ENCODE measurements at regions of chr5 and their contacts with region 1.

Region 1: DNA sequence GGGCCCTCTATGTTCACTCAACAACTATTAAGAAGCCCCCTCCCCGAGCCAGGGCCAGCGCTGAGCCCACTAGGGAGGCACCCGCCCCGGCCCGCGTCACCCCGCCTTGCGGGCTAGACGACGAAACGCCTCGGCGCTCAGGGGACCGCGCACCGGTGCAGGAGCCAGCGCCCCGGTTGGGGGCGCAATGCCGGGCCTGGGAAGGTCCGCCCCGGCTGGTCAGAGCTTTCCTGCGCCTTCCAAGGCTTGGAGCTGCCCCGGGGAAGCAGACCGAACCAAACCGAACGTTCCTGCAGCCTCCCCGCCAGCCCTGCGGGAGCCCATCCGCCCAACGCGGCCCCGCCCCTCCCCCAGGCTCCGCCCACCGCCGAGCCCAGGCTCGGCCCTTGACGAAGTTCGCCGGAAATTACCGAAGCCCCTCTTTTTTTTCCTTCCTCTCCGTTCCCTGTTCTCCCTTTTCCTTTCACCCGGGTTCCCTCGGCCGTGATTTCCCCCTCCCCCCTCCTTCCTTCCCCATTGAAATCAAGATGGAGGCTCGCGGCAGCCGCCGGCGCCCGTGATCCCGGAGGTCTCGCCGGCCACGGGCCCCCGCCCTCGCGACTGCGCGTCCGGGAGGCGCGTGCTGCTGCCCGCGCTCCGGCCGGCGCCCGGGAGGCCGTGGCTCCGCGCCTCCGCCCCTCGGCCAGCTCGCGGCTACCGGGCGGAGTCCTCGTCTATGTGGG is at the start of gene TRIO:
- DNase-seq: peak; percentile 93 to 96
- H3K4me3 ChIP-seq: peak within 1 kb of the TSS; percentile 92
- H3K4me3 Mint-ChIP-seq: peak within 1 kb of the TSS; percentile 84
- H3K27ac Mint-ChIP-seq: peak within 1 kb of the TSS; percentile 81
- H3K4me1 ChIP-seq: no peaks in the 10 kb centered on the region
- H3K4me1 Mint-ChIP-seq: no peaks in the 10 kb centered on the region
- H3K27me3 ChIP-seq: no peaks in the 10 kb centered on the region
- H3K27me3 Mint-ChIP-seq: peaks cover 3% of the 10 kb centered on the region
- CTCF ChIP-seq: peak; percentile 44 to 69
- total RNA-seq, gene TRIO: 92.0 and 98.9 TPM in 2 replicates

Region 2: GRCh38 chr5:13143630-13144029 is 999.4 kb before region 1 on chr5:
- CTCF ChIA-PET with region 1: no interaction called
- POLR2A ChIA-PET with region 1: no interaction called
- intact Hi-C with region 1: loop called (anchors 5 kb)
- DNase-seq: no peak
- H3K4me3 ChIP-seq: no peak overlapping the region
- H3K4me3 Mint-ChIP-seq: no peak overlapping the region
- H3K27ac Mint-ChIP-seq: no peak overlapping the region
- H3K4me1 ChIP-seq: no peaks in the 10 kb centered on the region
- H3K4me1 Mint-ChIP-seq: no peaks in the 10 kb centered on the region
- H3K27me3 ChIP-seq: no peaks in the 10 kb centered on the region
- H3K27me3 Mint-ChIP-seq: no peaks in the 10 kb centered on the region
- CTCF ChIP-seq: no peak

Region 3: DNA sequence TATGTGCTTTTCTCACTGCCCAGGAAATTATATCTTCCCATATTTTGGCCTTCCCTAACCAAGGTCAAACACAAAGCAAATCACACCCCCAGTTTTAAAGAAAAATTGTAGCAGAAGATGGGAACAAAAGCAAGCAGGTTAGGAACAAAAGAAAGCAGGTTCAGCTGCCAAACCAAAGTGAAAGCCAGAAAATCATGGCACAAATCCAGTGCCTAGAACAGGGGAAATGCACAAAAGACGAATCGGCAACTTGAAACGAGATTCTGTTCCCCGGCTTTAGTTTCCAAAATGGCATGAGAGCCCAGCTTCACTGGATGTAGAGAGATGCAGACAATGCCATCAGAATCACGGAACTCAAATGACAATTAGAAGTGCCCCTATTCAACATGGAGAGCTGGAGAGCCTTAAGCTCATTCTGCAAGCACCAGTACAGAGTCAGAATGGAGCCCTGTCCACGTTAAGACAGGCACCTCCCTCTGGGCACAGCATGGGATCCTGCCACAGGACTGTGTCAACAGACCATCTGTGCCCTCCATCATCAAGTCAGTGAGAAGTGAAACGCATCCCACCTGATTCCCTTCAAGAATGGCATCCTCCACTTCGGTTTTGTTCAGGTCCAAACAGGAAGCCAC is 212.3 kb before region 1 on chr5:
- CTCF ChIA-PET with region 1: no interaction called
- POLR2A ChIA-PET with region 1: no interaction called
- intact Hi-C with region 1: no loop called
- DNase-seq: no peak
- H3K4me3 ChIP-seq: no peak overlapping the region
- H3K4me3 Mint-ChIP-seq: no peak overlapping the region
- H3K27ac Mint-ChIP-seq: no peak overlapping the region
- H3K4me1 ChIP-seq: no peaks in the 10 kb centered on the region
- H3K4me1 Mint-ChIP-seq: no peaks in the 10 kb centered on the region
- H3K27me3 ChIP-seq: no peaks in the 10 kb centered on the region
- H3K27me3 Mint-ChIP-seq: no peaks in the 10 kb centered on the region
- CTCF ChIP-seq: no peak

Region 4: DNA sequence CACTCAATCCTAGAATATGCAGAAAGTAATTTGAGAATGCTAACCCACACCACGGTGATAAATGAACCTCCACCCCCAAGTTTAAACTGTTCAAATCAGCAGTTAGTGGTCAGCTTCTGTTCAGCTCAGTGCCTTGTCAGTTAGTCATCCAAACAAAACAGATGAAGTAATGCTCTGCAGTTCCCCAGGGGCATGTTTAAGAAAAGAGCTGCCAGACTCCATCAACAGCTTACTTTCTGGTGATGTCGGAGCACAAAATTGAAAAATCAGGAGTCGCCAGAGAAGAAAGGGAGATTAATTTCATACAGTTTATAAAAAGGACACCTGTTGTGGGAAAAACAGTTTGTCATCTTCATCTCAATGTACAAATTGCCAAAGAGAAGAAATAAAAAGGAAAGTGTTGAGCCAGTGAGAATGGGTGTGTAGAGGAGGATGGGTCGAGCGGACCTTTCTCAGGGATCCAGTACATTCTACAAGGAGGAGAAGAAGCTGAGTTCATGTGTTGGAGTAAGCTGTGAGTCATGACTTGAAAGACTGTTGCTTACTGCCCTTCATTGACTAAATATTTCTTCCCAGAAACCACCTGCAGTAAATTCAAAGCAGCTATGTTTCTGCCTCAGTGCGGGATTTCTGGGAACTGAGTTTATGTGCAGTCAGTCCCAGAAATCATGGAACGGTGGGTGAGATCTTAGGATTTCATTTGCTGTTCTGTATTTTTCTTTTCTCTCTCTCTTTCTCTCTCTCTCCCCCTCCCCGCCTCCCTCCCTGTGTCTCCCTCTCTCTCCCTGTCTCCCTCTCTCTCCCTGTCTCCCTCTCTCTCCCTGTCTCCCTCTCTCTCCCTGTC is 13.9 kb after region 1 on chr5:
- CTCF ChIA-PET with region 1: no interaction called
- POLR2A ChIA-PET with region 1: no interaction called
- intact Hi-C with region 1: no loop called
- DNase-seq: no peak
- H3K4me3 ChIP-seq: no peak overlapping the region
- H3K4me3 Mint-ChIP-seq: no peak overlapping the region
- H3K27ac Mint-ChIP-seq: no peak overlapping the region
- H3K4me1 ChIP-seq: peaks cover 20% of the 10 kb centered on the region
- H3K4me1 Mint-ChIP-seq: peaks cover 16% of the 10 kb centered on the region
- H3K27me3 ChIP-seq: no peaks in the 10 kb centered on the region
- H3K27me3 Mint-ChIP-seq: no peaks in the 10 kb centered on the region
- CTCF ChIP-seq: no peak

Region 5: GRCh38 chr5:14208071-14209021 is 65.4 kb after region 1 on chr5:
- CTCF ChIA-PET with region 1: interaction called, 4 read pairs
- POLR2A ChIA-PET with region 1: no interaction called
- intact Hi-C with region 1: loop called (anchors 2 kb)
- DNase-seq: peak; percentile 53 to 63
- H3K4me3 ChIP-seq: no peak overlapping the region
- H3K4me3 Mint-ChIP-seq: no peak overlapping the region
- H3K27ac Mint-ChIP-seq: no peak overlapping the region
- H3K4me1 ChIP-seq: peaks cover 32% of the 10 kb centered on the region
- H3K4me1 Mint-ChIP-seq: peaks cover 48% of the 10 kb centered on the region
- H3K27me3 ChIP-seq: no peaks in the 10 kb centered on the region
- H3K27me3 Mint-ChIP-seq: no peaks in the 10 kb centered on the region
- CTCF ChIP-seq: no peak

Region 6: GRCh38 chr5:14250084-14250695 is 107.2 kb after region 1 on chr5:
- CTCF ChIA-PET with region 1: no interaction called
- POLR2A ChIA-PET with region 1: interaction called, 4 read pairs
- intact Hi-C with region 1: loop called (anchors 1 kb)
- DNase-seq: peak; percentile 84 to 87
- H3K4me3 ChIP-seq: peak overlapping the region; percentile 31
- H3K4me3 Mint-ChIP-seq: peak overlapping the region; percentile 70
- H3K27ac Mint-ChIP-seq: peak overlapping the region; percentile 80
- H3K4me1 ChIP-seq: peaks cover 8% of the 10 kb centered on the region; the same call in 1 of the 2 replicates
- H3K4me1 Mint-ChIP-seq: peaks cover 19% of the 10 kb centered on the region
- H3K27me3 ChIP-seq: no peaks in the 10 kb centered on the region
- H3K27me3 Mint-ChIP-seq: no peaks in the 10 kb centered on the region
- CTCF ChIP-seq: no peak

Region 7: GRCh38 chr5:14270209-14270702 is 127.3 kb after region 1 on chr5:
- CTCF ChIA-PET with region 1: interaction called, 10 read pairs
- POLR2A ChIA-PET with region 1: interaction called, 4 read pairs
- intact Hi-C with region 1: loop called (anchors 1 kb)
- DNase-seq: peak; percentile 57 to 73
- H3K4me3 ChIP-seq: no peak overlapping the region
- H3K4me3 Mint-ChIP-seq: no peak overlapping the region
- H3K27ac Mint-ChIP-seq: no peak overlapping the region
- H3K4me1 ChIP-seq: peaks cover 51% of the 10 kb centered on the region
- H3K4me1 Mint-ChIP-seq: peaks cover 53% of the 10 kb centered on the region
- H3K27me3 ChIP-seq: no peaks in the 10 kb centered on the region
- H3K27me3 Mint-ChIP-seq: no peaks in the 10 kb centered on the region
- CTCF ChIP-seq: peak; percentile 73 to 83

Measured in Caco-2 (cell line).